IMR-90 (cell line): ENCODE measurements at regions of chr4 and their contacts with region 1.

Region 1: GRCh38 chr4:80812145-80812544 is 218.4 kb upstream of the BMP3 start:
- DNase-seq: no peak
- ATAC-seq: no peak
- H3K4me3 ChIP-seq: no peak overlapping the region
- H3K27ac ChIP-seq: no peak overlapping the region
- H3K4me1 ChIP-seq: no peaks in the 10 kb centered on the region
- H3K27me3 ChIP-seq: no peaks in the 10 kb centered on the region
- CTCF ChIP-seq: no peak
- POLR2A ChIP-seq: no peak
- RAD21 ChIP-seq: no peak

Region 2: GRCh38 chr4:80619070-80619674 is 193.0 kb before region 1 on chr4:
- CTCF ChIA-PET with region 1: no interaction called
- POLR2A ChIA-PET with region 1: no interaction called
- dilution Hi-C with region 1: no loop called
- in situ Hi-C with region 1: no loop called
- intact Hi-C with region 1: loop called (anchors 1 kb)
- DNase-seq: no peak
- ATAC-seq: no peak
- H3K4me3 ChIP-seq: no peak overlapping the region
- H3K27ac ChIP-seq: no peak overlapping the region
- H3K4me1 ChIP-seq: no peaks in the 10 kb centered on the region
- H3K27me3 ChIP-seq: no peaks in the 10 kb centered on the region
- CTCF ChIP-seq: no peak
- POLR2A ChIP-seq: no peak
- RAD21 ChIP-seq: no peak

Region 3: GRCh38 chr4:81152839-81153713 is 340.9 kb after region 1 on chr4:
- CTCF ChIA-PET with region 1: no interaction called
- POLR2A ChIA-PET with region 1: no interaction called
- dilution Hi-C with region 1: no loop called
- in situ Hi-C with region 1: no loop called
- intact Hi-C with region 1: no loop called
- DNase-seq: no peak
- ATAC-seq: no peak
- H3K4me3 ChIP-seq: no peak overlapping the region
- H3K27ac ChIP-seq: no peak overlapping the region
- H3K4me1 ChIP-seq: no peaks in the 10 kb centered on the region
- H3K27me3 ChIP-seq: no peaks in the 10 kb centered on the region
- CTCF ChIP-seq: no peak
- POLR2A ChIP-seq: no peak
- RAD21 ChIP-seq: no peak

Region 4: GRCh38 chr4:81676537-81676936 is 864.4 kb after region 1 on chr4:
- CTCF ChIA-PET with region 1: no interaction called
- POLR2A ChIA-PET with region 1: no interaction called
- dilution Hi-C with region 1: no loop called
- in situ Hi-C with region 1: no loop called
- intact Hi-C with region 1: no loop called
- DNase-seq: no peak
- ATAC-seq: no peak
- H3K4me3 ChIP-seq: no peak overlapping the region
- H3K27ac ChIP-seq: no peak overlapping the region
- H3K4me1 ChIP-seq: no peaks in the 10 kb centered on the region
- H3K27me3 ChIP-seq: no peaks in the 10 kb centered on the region
- CTCF ChIP-seq: no peak
- POLR2A ChIP-seq: no peak
- RAD21 ChIP-seq: no peak